ENCODE measurements at regions of chr1 and their contacts with region 1.

Region 1: DNA sequence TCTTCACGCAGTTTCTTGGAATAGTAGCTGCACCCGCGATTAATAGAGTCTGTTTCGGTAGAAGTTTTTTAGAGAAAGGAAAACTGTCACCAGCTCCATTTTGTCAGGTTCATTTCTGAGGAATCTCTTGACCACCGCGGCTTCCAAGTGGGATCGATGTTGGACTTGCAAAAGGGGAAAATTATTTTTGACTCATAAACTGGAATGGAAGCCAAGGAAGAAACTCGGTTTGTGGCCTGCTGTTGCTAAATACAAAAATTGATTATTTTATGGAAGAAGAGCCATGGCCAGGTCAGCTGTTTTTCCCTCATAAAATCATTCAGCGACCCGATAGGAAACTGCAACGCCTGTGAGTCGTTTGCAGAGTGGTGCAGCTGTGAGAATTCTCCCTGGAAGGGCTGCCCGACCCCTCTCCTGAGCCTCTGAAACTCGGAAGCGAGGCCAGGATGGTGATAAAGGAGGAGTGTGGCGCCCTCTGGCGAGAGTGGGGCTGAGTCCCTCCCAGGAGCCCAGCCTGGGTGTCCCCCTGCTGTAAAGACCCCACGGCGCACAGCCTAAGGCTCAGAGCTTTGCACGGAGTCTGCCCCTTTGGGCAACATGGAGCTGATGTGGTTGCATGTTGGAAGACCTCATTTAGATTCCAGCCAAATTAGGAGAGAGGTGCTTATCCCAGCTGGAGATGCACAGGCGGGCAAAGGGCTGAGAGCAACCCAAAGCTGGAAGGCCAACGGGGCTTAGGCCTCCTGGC is 83.6 kb upstream of the SLC25A33 start:
- DNase-seq: peak; percentile 42 to 80 (median 68)
- ATAC-seq: peak; percentile 83
- H3K4me3 ChIP-seq: no peak overlapping the region
- H3K4me3 Mint-ChIP-seq: no peak overlapping the region
- H3K27ac ChIP-seq: no peak overlapping the region
- H3K27ac Mint-ChIP-seq: no peak overlapping the region
- H3K4me1 ChIP-seq: no peaks in the 10 kb centered on the region
- H3K4me1 Mint-ChIP-seq: no peaks in the 10 kb centered on the region
- H3K27me3 ChIP-seq: no peaks in the 10 kb centered on the region
- H3K27me3 Mint-ChIP-seq: peaks cover 2% of the 10 kb centered on the region
- CTCF ChIP-seq: peak; percentile 79

Region 2: DNA sequence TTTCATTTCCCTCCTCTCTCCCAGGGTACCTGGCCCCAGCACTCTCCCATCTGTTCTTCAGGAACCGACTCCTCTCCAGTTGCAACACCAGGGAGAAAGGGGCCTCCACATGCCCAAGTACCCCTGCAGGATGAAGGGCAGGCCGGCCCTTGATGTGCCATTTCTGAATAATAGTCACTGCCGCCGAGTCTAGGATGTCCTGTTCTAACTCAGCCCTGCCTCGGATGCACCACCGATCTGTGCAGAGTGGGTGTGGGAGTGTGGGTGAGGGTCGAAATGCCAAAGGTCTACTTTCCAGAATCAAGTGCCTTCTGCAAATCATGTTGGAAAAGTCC is 188.3 kb before region 1 on chr1:
- CTCF ChIA-PET with region 1: interaction called, 14 read pairs
- POLR2A ChIA-PET with region 1: no interaction called
- intact Hi-C with region 1: loop called (anchors 1 kb)
- DNase-seq: no peak
- ATAC-seq: no peak
- H3K4me3 ChIP-seq: no peak overlapping the region
- H3K4me3 Mint-ChIP-seq: no peak overlapping the region
- H3K27ac ChIP-seq: no peak overlapping the region
- H3K27ac Mint-ChIP-seq: no peak overlapping the region
- H3K4me1 ChIP-seq: no peaks in the 10 kb centered on the region
- H3K4me1 Mint-ChIP-seq: peaks cover 9% of the 10 kb centered on the region
- H3K27me3 ChIP-seq: no peaks in the 10 kb centered on the region
- H3K27me3 Mint-ChIP-seq: no peaks in the 10 kb centered on the region
- CTCF ChIP-seq: no peak

Region 3: GRCh38 chr1:9281908-9282695 is 173.6 kb before region 1 on chr1:
- CTCF ChIA-PET with region 1: interaction called, 135 read pairs
- POLR2A ChIA-PET with region 1: no interaction called
- intact Hi-C with region 1: no loop called
- DNase-seq: no peak
- ATAC-seq: no peak
- H3K4me3 ChIP-seq: no peak overlapping the region
- H3K4me3 Mint-ChIP-seq: no peak overlapping the region
- H3K27ac ChIP-seq: no peak overlapping the region
- H3K27ac Mint-ChIP-seq: no peak overlapping the region
- H3K4me1 ChIP-seq: peaks cover 34% of the 10 kb centered on the region
- H3K4me1 Mint-ChIP-seq: peaks cover 45% of the 10 kb centered on the region
- H3K27me3 ChIP-seq: no peaks in the 10 kb centered on the region
- H3K27me3 Mint-ChIP-seq: no peaks in the 10 kb centered on the region
- CTCF ChIP-seq: no peak

Region 4: GRCh38 chr1:9292361-9293240 is 163.1 kb before region 1 on chr1 and contains the start of gene SPSB1:
- CTCF ChIA-PET with region 1: interaction called, 135 read pairs
- POLR2A ChIA-PET with region 1: interaction called, 5 read pairs
- intact Hi-C with region 1: loop called (anchors 1 kb)
- DNase-seq: peak; percentile 33 to 83 (median 66)
- ATAC-seq: peak; percentile 68
- H3K4me3 ChIP-seq: peak within 1 kb of the TSS; percentile 45 to 61
- H3K4me3 Mint-ChIP-seq: peak within 1 kb of the TSS; percentile 73
- H3K27ac ChIP-seq: no peak within 1 kb of the TSS
- H3K27ac Mint-ChIP-seq: no peak within 1 kb of the TSS
- H3K4me1 ChIP-seq: peaks cover 17% of the 10 kb centered on the region
- H3K4me1 Mint-ChIP-seq: peaks cover 10% of the 10 kb centered on the region
- H3K27me3 ChIP-seq: peaks cover 0 to 4% of the 10 kb centered on the region in 2 experiments
- H3K27me3 Mint-ChIP-seq: no peaks in the 10 kb centered on the region
- CTCF ChIP-seq: no peak
- total RNA-seq, gene SPSB1: 1.6 to 2.2 TPM

Region 5: DNA sequence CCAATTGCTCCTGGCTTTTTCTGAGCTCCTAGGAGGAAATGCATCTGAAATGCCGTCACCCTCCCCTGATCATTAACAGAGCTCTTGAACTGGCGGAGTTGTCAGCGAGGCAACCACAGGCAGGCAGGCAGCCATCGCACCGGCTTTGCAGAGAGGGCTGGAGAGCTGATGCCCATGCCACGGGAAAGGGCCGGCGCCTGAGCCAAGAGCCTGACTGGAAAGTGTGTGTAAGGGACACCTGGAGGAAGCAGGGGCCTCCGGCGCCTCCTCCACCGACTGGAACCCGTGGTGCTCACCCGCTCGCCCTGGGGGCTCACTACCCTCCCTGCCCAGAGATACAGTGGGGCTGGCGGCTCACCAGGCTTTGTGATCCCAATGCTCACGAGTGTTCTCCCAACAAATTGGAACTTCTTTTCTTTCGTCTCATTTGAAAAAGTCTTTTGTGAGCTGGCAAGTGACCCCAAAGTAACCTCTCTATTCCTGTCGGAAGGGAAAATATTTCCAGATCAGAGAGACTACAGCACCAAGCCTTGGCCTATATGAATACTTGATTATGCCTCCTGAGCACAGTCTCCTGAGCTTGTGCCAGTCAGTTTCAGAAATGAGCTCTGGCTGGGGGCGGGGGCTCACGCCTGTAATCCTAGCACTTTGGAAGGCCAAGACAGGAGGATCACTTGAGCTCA is 14.1 kb before region 1 on chr1:
- CTCF ChIA-PET with region 1: interaction called, 10 read pairs
- POLR2A ChIA-PET with region 1: no interaction called
- intact Hi-C with region 1: no loop called
- DNase-seq: no peak
- ATAC-seq: no peak
- H3K4me3 ChIP-seq: no peak overlapping the region
- H3K4me3 Mint-ChIP-seq: no peak overlapping the region
- H3K27ac ChIP-seq: no peak overlapping the region
- H3K27ac Mint-ChIP-seq: no peak overlapping the region
- H3K4me1 ChIP-seq: no peaks in the 10 kb centered on the region
- H3K4me1 Mint-ChIP-seq: no peaks in the 10 kb centered on the region
- H3K27me3 ChIP-seq: no peaks in the 10 kb centered on the region
- H3K27me3 Mint-ChIP-seq: no peaks in the 10 kb centered on the region
- CTCF ChIP-seq: no peak

Region 6: DNA sequence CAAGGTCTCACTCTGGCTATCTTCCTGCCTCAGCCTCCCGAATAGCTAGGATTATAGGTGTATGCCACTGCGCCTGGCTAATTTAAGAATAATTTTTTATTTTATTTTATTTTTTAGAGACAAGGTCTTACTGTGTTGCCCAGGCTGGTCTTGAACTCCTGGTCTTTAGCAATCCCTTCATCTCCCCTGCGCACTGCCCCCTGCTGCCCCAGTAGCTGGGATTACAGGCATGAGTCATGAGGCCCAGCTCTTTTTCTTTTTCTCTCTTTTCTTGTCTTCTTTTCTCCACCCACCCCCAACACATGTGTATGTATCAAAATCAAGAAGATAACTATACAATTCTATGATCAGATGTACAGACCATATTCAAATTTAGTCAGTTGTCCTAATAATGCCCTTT is 1106.3 kb after region 1 on chr1:
- CTCF ChIA-PET with region 1: no interaction called
- POLR2A ChIA-PET with region 1: no interaction called
- intact Hi-C with region 1: no loop called
- DNase-seq: peak in 3 of 9 experiments; percentile 26 to 48 (median 35)
- ATAC-seq: no peak
- H3K4me3 ChIP-seq: no peak overlapping the region
- H3K4me3 Mint-ChIP-seq: no peak overlapping the region
- H3K27ac ChIP-seq: no peak overlapping the region
- H3K27ac Mint-ChIP-seq: peak overlapping the region; percentile 6
- H3K4me1 ChIP-seq: no peaks in the 10 kb centered on the region
- H3K4me1 Mint-ChIP-seq: no peaks in the 10 kb centered on the region
- H3K27me3 ChIP-seq: no peaks in the 10 kb centered on the region
- H3K27me3 Mint-ChIP-seq: no peaks in the 10 kb centered on the region
- CTCF ChIP-seq: no peak